Panc1 (cell line): ENCODE measurements at regions of chr2 and their contacts with region 1.

Region 1: DNA sequence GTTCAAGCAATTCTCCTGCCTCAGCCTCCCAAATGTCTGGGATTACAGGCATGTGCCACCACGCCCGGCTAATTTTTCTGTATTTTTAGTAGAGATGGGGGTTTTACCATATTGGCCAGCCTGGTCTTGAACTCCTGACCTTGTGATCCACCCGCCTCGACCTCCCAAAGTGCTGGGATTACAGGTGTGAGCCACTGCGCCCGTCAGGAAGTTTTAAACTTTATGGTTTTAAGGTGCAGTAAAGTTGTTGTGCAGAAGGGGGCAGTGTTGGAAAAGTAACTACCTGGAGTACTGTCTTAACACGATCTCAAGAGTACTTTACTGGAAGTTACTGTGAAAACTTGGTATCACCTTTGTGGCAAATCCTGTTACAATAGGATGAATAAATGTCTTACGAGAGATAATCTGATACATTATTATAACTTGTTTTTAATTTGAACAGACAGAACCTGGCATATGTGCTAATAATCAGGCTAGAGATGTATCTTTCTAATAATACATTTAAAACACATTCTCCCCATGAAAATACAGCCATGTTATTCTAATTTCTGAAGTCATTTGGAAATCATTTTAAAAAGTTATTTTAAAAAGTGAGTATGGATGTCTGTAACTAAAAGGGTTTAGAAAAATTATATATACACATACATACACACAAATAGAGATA is 10.8 kb downstream of the SPDYA start:
- DNase-seq: peak; percentile 75
- ATAC-seq: peak; percentile 89
- H3K4me3 ChIP-seq: no peak overlapping the region
- H3K27ac ChIP-seq: no peak overlapping the region
- H3K4me1 ChIP-seq: no peaks in the 10 kb centered on the region
- H3K27me3 ChIP-seq: no peaks in the 10 kb centered on the region
- CTCF ChIP-seq: peak; percentile 85

Region 2: GRCh38 chr2:28507806-28508764 is 313.3 kb before region 1 on chr2:
- CTCF ChIA-PET with region 1: no interaction called
- POLR2A ChIA-PET with region 1: no interaction called
- in situ Hi-C with region 1: no loop called
- intact Hi-C with region 1: no loop called
- DNase-seq: peak; percentile 76
- ATAC-seq: peak; percentile 87
- H3K4me3 ChIP-seq: no peak overlapping the region
- H3K27ac ChIP-seq: 0 out of 2 replicates have a peak overlapping the region, but pooled peaks have one; percentile 17
- H3K4me1 ChIP-seq: no peaks in the 10 kb centered on the region
- H3K27me3 ChIP-seq: peaks cover 7% of the 10 kb centered on the region
- CTCF ChIP-seq: no peak

Region 3: GRCh38 chr2:28952816-28953211 is 131.4 kb after region 1 on chr2:
- CTCF ChIA-PET with region 1: no interaction called
- POLR2A ChIA-PET with region 1: no interaction called
- in situ Hi-C with region 1: no loop called
- intact Hi-C with region 1: loop called (anchors 5 kb)
- DNase-seq: no peak
- ATAC-seq: no peak
- H3K4me3 ChIP-seq: no peak overlapping the region
- H3K27ac ChIP-seq: no peak overlapping the region
- H3K4me1 ChIP-seq: peaks cover 19% of the 10 kb centered on the region
- H3K27me3 ChIP-seq: no peaks in the 10 kb centered on the region
- CTCF ChIP-seq: peak; percentile 49